Activated naive CD4-positive, alpha-beta T cell treated with anti-CD3 and anti-CD28 coated beads for 36 hours (primary cell): ENCODE measurements at regions of chrX and their contacts with region 1.

Region 1: DNA sequence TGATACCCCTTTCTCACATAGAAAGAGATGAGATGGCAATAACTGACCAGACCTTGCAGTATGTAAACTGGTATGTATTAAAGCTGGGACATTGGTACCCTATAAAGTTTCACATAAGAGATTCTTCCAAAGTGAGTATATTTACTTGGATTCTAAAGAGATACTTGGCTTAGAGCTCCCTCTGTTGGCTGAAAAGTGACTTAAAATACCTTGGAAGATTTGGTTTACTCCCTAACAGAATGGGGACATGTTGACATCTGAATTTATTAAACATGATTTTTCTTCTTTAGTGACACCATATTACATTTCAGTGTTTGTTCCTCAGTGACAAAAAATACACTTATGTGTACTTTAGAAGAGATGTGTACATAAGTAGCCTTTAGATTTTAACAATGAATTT is 47.9 kb upstream of the RGN start:
- DNase-seq: peak; percentile 17
- H3K4me3 Mint-ChIP-seq: no peak overlapping the region
- H3K27ac Mint-ChIP-seq: no peak overlapping the region
- H3K4me1 Mint-ChIP-seq: no peaks in the 10 kb centered on the region
- H3K27me3 Mint-ChIP-seq: no peaks in the 10 kb centered on the region

Region 2: DNA sequence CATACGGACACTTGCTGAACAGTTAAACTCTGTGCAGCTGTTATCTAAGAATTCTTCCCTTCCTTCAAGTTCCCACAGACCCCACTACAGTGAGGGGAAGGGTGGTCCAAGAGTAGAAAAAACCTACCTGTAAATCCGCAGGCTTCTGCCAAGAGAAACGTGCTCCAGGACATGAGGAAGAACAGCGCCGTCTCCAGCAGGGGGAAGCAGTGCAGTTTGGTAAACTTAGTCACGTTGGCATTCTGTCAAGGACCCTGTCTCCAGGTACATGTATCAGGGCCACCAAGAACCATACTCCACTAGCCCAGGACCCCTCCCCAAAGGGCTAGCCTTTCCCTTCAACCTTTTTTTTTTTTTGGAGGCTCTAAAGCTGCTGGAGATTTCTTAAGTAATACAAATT is 376.9 kb before region 1 on chrX:
- CTCF ChIA-PET with region 1: no interaction called
- intact Hi-C with region 1: no loop called
- DNase-seq: peak; percentile 30
- H3K4me3 Mint-ChIP-seq: no peak overlapping the region
- H3K27ac Mint-ChIP-seq: no peak overlapping the region
- H3K4me1 Mint-ChIP-seq: peaks cover 4% of the 10 kb centered on the region
- H3K27me3 Mint-ChIP-seq: no peaks in the 10 kb centered on the region

Region 3: GRCh38 chrX:46903458-46904242 is 126.7 kb before region 1 on chrX:
- CTCF ChIA-PET with region 1: interaction called, 4 read pairs
- intact Hi-C with region 1: loop called (anchors 1 kb)
- DNase-seq: peak; percentile 63
- H3K4me3 Mint-ChIP-seq: peak overlapping the region; percentile 59
- H3K27ac Mint-ChIP-seq: no peak overlapping the region
- H3K4me1 Mint-ChIP-seq: no peaks in the 10 kb centered on the region
- H3K27me3 Mint-ChIP-seq: peaks cover 3% of the 10 kb centered on the region

Region 4: DNA sequence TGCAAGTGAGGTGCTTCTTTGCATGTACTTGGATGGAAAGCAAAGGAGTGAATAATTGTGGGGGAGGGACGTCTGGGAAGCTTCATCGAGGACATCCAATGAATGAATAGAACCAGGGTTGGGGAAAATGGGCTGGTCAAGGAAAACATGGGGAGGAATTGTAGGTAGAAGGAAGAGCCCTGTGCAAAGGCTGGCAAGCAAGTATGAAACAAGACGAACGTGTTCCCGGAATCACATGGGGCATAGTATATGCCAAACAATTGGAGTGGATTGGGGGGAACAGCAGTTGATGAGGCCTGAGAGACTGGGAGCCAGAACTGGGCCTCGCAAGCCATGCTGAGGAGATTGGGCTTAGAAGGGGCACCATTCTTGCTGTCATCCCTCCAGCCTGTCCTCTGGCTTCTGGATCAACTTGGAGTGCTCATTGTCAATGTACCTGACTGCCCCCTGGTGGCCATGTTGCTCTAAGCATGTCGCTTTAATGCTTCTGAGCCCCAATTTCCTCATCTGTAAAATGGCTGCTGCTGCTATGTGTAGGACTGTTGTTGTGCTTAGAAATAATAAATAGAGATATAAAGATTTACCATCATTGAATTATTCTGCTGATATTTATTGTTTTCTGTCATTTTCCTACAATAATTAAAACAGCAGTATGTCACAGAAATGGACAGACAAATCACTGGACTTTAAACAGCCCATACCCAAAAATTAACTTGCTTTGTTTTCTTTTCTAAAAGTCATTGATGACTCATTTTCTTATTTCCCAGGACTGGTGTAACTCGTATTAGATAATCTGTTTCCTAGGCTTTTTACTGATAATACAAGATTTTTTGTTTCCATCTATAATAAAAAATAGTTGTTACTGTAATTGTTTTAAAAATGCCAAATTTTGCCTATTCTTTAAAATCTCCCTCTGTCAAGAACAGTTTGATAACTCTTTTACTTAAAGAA is 51.7 kb before region 1 on chrX:
- CTCF ChIA-PET with region 1: interaction called, 3 read pairs
- intact Hi-C with region 1: loop called (anchors 5 kb)
- DNase-seq: peak; percentile 87
- H3K4me3 Mint-ChIP-seq: no peak overlapping the region
- H3K27ac Mint-ChIP-seq: no peak overlapping the region
- H3K4me1 Mint-ChIP-seq: no peaks in the 10 kb centered on the region
- H3K27me3 Mint-ChIP-seq: no peaks in the 10 kb centered on the region

Region 5: GRCh38 chrX:47012131-47012530 is 18.2 kb before region 1 on chrX:
- CTCF ChIA-PET with region 1: no interaction called
- intact Hi-C with region 1: no loop called
- DNase-seq: no peak
- H3K4me3 Mint-ChIP-seq: no peak overlapping the region
- H3K27ac Mint-ChIP-seq: no peak overlapping the region
- H3K4me1 Mint-ChIP-seq: no peaks in the 10 kb centered on the region
- H3K27me3 Mint-ChIP-seq: no peaks in the 10 kb centered on the region

Region 6: GRCh38 chrX:47093248-47093647 is 62.9 kb after region 1 on chrX:
- CTCF ChIA-PET with region 1: interaction called, 5 read pairs
- intact Hi-C with region 1: loop called (anchors 2 kb)
- DNase-seq: peak; percentile 21
- H3K4me3 Mint-ChIP-seq: no peak overlapping the region
- H3K27ac Mint-ChIP-seq: no peak overlapping the region
- H3K4me1 Mint-ChIP-seq: peaks cover 13% of the 10 kb centered on the region
- H3K27me3 Mint-ChIP-seq: no peaks in the 10 kb centered on the region